Activated CD4-positive, alpha-beta memory T cell treated with anti-CD3 and anti-CD28 coated beads for 36 hours (primary cell): ENCODE measurements at regions of chr19 and their contacts with region 1.

Region 1: GRCh38 chr19:56314562-56315077 is at the start of gene ZSCAN5A:
- DNase-seq: peak; percentile 98
- H3K4me3 Mint-ChIP-seq: peak within 1 kb of the TSS; percentile 91
- H3K27ac Mint-ChIP-seq: peak within 1 kb of the TSS; percentile 97
- H3K4me1 Mint-ChIP-seq: peaks cover 23% of the 10 kb centered on the region
- H3K27me3 Mint-ChIP-seq: no peaks in the 10 kb centered on the region
- total RNA-seq, gene ZSCAN5A: 4.5 to 5.2 TPM

Region 2: GRCh38 chr19:56140583-56141416 is 173.8 kb before region 1 on chr19 and contains the start of gene ZNF444:
- CTCF ChIA-PET with region 1: interaction called, 3 read pairs
- POLR2A ChIA-PET with region 1: no interaction called
- intact Hi-C with region 1: loop called (anchors 1 kb)
- DNase-seq: peak; percentile 99
- H3K4me3 Mint-ChIP-seq: peak within 1 kb of the TSS; percentile 92
- H3K27ac Mint-ChIP-seq: peak within 1 kb of the TSS; percentile 95
- H3K4me1 Mint-ChIP-seq: peaks cover 31% of the 10 kb centered on the region
- H3K27me3 Mint-ChIP-seq: no peaks in the 10 kb centered on the region
- total RNA-seq, gene ZNF444: 23.1 to 26.1 TPM

Region 3: DNA sequence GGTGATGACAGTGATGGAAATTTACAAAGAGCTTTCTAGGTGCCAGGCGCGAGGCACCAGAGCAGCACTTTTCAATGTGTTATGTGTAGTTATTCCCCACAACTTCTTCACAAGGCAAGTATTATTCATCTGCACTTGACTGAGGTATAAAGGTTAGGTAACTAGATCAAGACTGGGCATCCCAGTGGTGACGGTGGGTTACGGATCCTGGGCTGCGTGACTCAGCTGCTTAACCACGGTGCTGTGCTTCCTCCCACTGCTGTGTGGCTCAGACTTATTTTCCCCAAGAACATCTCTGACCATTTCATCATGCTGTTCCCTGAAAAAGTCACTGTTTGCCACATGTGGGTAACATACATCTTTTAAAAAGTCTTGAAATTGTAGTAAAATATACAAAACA is 22.8 kb before region 1 on chr19:
- CTCF ChIA-PET with region 1: interaction called, 10 read pairs
- POLR2A ChIA-PET with region 1: no interaction called
- intact Hi-C with region 1: no loop called
- DNase-seq: peak; percentile 17
- H3K4me3 Mint-ChIP-seq: no peak overlapping the region
- H3K27ac Mint-ChIP-seq: no peak overlapping the region
- H3K4me1 Mint-ChIP-seq: no peaks in the 10 kb centered on the region
- H3K27me3 Mint-ChIP-seq: no peaks in the 10 kb centered on the region

Region 4: GRCh38 chr19:56393119-56394012 is 78.7 kb after region 1 on chr19 and contains the start of gene ZNF582:
- CTCF ChIA-PET with region 1: no interaction called
- POLR2A ChIA-PET with region 1: no interaction called
- intact Hi-C with region 1: loop called (anchors 1 kb)
- DNase-seq: peak; percentile 94
- H3K4me3 Mint-ChIP-seq: peak within 1 kb of the TSS; percentile 77
- H3K27ac Mint-ChIP-seq: peak within 1 kb of the TSS; percentile 84
- H3K4me1 Mint-ChIP-seq: peaks cover 7% of the 10 kb centered on the region
- H3K27me3 Mint-ChIP-seq: no peaks in the 10 kb centered on the region
- total RNA-seq, gene ZNF582: 0.58 to 0.71 TPM

Region 5: GRCh38 chr19:56423276-56423984 is 108.8 kb after region 1 on chr19:
- CTCF ChIA-PET with region 1: no interaction called
- POLR2A ChIA-PET with region 1: no interaction called
- intact Hi-C with region 1: no loop called
- DNase-seq: no peak
- H3K4me3 Mint-ChIP-seq: no peak overlapping the region
- H3K27ac Mint-ChIP-seq: no peak overlapping the region
- H3K4me1 Mint-ChIP-seq: no peaks in the 10 kb centered on the region
- H3K27me3 Mint-ChIP-seq: no peaks in the 10 kb centered on the region